Caco-2 (cell line): ENCODE measurements at regions of chr7 and their contacts with region 1.

Region 1: GRCh38 chr7:36389371-36390198 is at the start of gene ANLN:
- DNase-seq: peak; percentile 96 to 97
- H3K4me3 ChIP-seq: peak within 1 kb of the TSS; percentile 78
- H3K4me3 Mint-ChIP-seq: peak within 1 kb of the TSS; percentile 92
- H3K27ac Mint-ChIP-seq: peak within 1 kb of the TSS; percentile 95
- H3K4me1 ChIP-seq: peaks cover 18% of the 10 kb centered on the region
- H3K4me1 Mint-ChIP-seq: peaks cover 12% of the 10 kb centered on the region
- H3K27me3 ChIP-seq: no peaks in the 10 kb centered on the region
- H3K27me3 Mint-ChIP-seq: no peaks in the 10 kb centered on the region
- CTCF ChIP-seq: no peak
- total RNA-seq, gene ANLN: 105 and 106 TPM in 2 replicates

Region 2: DNA sequence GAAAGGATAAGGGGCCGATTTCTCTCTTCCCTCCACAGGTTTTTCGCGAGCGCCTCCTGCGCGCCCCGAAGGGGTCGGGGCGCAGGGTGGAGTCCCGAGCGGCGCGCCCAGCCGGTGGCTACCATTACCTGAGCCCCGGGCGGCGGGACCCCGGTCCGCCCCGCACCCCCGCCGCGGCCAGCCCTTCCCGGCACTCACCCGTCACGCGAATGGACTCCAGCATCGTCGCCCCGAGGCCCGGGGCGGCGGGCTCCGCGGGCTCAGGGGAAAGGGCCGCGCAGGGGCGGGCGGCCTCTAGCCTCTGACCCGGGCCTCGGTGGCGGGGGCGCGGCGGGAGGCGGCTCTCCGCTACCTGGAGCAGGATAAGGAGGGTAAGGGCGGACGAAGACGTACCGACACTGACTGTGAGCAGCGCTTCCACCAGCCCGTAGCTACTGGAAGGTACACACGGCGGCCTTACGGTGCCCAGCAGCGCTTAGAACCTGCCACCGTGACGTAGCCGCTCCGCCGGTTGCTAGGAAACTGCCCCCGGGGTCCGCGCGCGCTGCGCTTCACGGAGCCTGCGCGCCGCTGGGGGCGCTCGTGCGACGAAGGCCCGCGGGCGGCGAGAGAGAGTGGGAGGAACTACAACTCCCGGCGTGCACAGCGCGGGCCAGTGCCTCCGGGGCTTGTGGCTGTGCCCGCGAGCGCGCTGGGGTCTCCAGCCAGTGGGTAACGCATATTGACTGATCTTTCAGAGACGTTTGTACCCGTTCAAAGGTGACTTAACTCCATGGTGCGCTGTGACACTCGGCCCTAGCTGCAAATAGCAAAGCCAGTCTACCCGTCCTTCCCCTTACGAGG is 22.6 kb before region 1 on chr7:
- CTCF ChIA-PET with region 1: interaction called, 7 read pairs
- POLR2A ChIA-PET with region 1: interaction called, 10 read pairs
- intact Hi-C with region 1: loop called (anchors 1 kb)
- DNase-seq: peak; percentile 87 to 95
- H3K4me3 ChIP-seq: peak overlapping the region; percentile 67
- H3K4me3 Mint-ChIP-seq: peak overlapping the region; percentile 85
- H3K27ac Mint-ChIP-seq: peak overlapping the region; percentile 53
- H3K4me1 ChIP-seq: no peaks in the 10 kb centered on the region
- H3K4me1 Mint-ChIP-seq: no peaks in the 10 kb centered on the region
- H3K27me3 ChIP-seq: no peaks in the 10 kb centered on the region
- H3K27me3 Mint-ChIP-seq: peaks cover 2% of the 10 kb centered on the region
- CTCF ChIP-seq: peak; percentile 83 to 90

Region 3: GRCh38 chr7:36468370-36469101 is 79.0 kb after region 1 on chr7:
- CTCF ChIA-PET with region 1: no interaction called
- POLR2A ChIA-PET with region 1: no interaction called
- intact Hi-C with region 1: no loop called
- DNase-seq: no peak
- H3K4me3 ChIP-seq: no peak overlapping the region
- H3K4me3 Mint-ChIP-seq: no peak overlapping the region
- H3K27ac Mint-ChIP-seq: no peak overlapping the region
- H3K4me1 ChIP-seq: no peaks in the 10 kb centered on the region
- H3K4me1 Mint-ChIP-seq: no peaks in the 10 kb centered on the region
- H3K27me3 ChIP-seq: no peaks in the 10 kb centered on the region
- H3K27me3 Mint-ChIP-seq: no peaks in the 10 kb centered on the region
- CTCF ChIP-seq: no peak